ENCODE measurements at regions of chr18 and their contacts with region 1.

Region 1: GRCh38 chr18:41378598-41378997 is 576.4 kb upstream of the PIK3C3 start:
- DNase-seq: peak; percentile 70
- ATAC-seq: peak; percentile 97
- H3K4me3 ChIP-seq: no peak overlapping the region
- H3K27ac ChIP-seq: no peak overlapping the region
- H3K4me1 ChIP-seq: no peaks in the 10 kb centered on the region
- H3K27me3 ChIP-seq: no peaks in the 10 kb centered on the region; the same call in 1 of the 2 replicates
- CTCF ChIP-seq: peak; percentile 69
- POLR2A ChIP-seq: no peak
- RAD21 ChIP-seq: peak; percentile 82

Region 2: DNA sequence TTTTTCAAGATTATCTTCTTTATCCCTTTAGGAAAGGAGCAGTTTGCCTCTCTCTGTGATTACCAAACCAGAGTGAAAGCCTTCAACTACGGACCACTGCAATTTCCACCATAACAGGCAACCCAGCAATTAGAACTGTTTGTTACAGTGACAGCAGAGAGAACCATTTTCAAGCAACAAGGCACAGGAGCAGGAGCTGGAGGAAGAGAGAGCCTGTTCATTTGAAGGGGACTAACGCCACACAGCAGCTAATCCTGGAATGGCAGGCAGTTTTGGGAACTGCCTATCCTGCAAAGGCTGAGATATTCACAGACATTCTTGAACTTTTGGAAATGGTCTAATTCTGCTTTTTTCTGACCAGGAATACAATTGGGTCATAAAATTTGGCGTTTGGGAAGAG is 965.4 kb before region 1 on chr18:
- CTCF ChIA-PET with region 1: no interaction called
- POLR2A ChIA-PET with region 1: no interaction called
- dilution Hi-C with region 1: no loop called
- in situ Hi-C with region 1: loop called (anchors 25 kb)
- intact Hi-C with region 1: loop called (anchors 10 kb)
- DNase-seq: peak; percentile 45
- ATAC-seq: peak; percentile 63; the same call in 1 of the 2 replicates
- H3K4me3 ChIP-seq: no peak overlapping the region
- H3K27ac ChIP-seq: no peak overlapping the region
- H3K4me1 ChIP-seq: no peaks in the 10 kb centered on the region
- H3K27me3 ChIP-seq: no peaks in the 10 kb centered on the region
- CTCF ChIP-seq: peak; percentile 57
- POLR2A ChIP-seq: no peak
- RAD21 ChIP-seq: peak; percentile 75

Region 3: DNA sequence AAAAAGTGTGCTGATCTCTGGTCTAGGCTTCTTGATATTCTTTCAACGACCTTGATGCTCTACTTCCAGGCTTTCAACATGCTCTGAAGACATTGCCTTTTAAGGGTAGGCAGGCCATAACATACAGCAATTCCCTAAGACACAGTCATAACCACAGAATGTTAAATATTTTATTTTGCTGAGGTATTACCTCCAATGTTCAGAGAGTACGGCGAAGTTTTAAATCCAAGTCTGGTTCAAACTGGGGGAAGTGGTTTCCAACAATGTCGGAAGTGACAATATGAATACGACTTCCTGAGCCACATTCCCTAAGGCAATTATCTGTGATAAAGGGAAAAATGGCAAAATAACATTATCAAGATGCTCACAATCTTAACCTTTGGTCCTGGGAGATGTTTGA is 501.5 kb before region 1 on chr18:
- CTCF ChIA-PET with region 1: no interaction called
- POLR2A ChIA-PET with region 1: no interaction called
- dilution Hi-C with region 1: no loop called
- in situ Hi-C with region 1: no loop called
- intact Hi-C with region 1: loop called (anchors 1 kb)
- DNase-seq: peak; percentile 97
- ATAC-seq: peak; percentile 95
- H3K4me3 ChIP-seq: no peak overlapping the region
- H3K27ac ChIP-seq: peak overlapping the region; percentile 75
- H3K4me1 ChIP-seq: peaks cover 12% of the 10 kb centered on the region
- H3K27me3 ChIP-seq: no peaks in the 10 kb centered on the region
- CTCF ChIP-seq: no peak
- POLR2A ChIP-seq: no peak
- RAD21 ChIP-seq: no peak; the same call in 1 of the 2 replicates

Region 4: GRCh38 chr18:40957533-40958070 is 421.0 kb before region 1 on chr18:
- CTCF ChIA-PET with region 1: interaction called, 3 read pairs
- POLR2A ChIA-PET with region 1: no interaction called
- dilution Hi-C with region 1: no loop called
- in situ Hi-C with region 1: no loop called
- intact Hi-C with region 1: loop called (anchors 10 kb)
- DNase-seq: peak; percentile 52
- ATAC-seq: peak; percentile 66
- H3K4me3 ChIP-seq: no peak overlapping the region
- H3K27ac ChIP-seq: no peak overlapping the region
- H3K4me1 ChIP-seq: no peaks in the 10 kb centered on the region; the same call in 1 of the 2 replicates
- H3K27me3 ChIP-seq: no peaks in the 10 kb centered on the region
- CTCF ChIP-seq: no peak
- POLR2A ChIP-seq: no peak
- RAD21 ChIP-seq: no peak

Region 5: GRCh38 chr18:41144441-41144840 is 234.2 kb before region 1 on chr18:
- CTCF ChIA-PET with region 1: no interaction called
- POLR2A ChIA-PET with region 1: no interaction called
- dilution Hi-C with region 1: no loop called
- in situ Hi-C with region 1: no loop called
- intact Hi-C with region 1: loop called (anchors 10 kb)
- DNase-seq: peak; percentile 82
- ATAC-seq: peak; percentile 91
- H3K4me3 ChIP-seq: no peak overlapping the region
- H3K27ac ChIP-seq: no peak overlapping the region
- H3K4me1 ChIP-seq: no peaks in the 10 kb centered on the region; the same call in 1 of the 2 replicates
- H3K27me3 ChIP-seq: no peaks in the 10 kb centered on the region
- CTCF ChIP-seq: no peak
- POLR2A ChIP-seq: no peak
- RAD21 ChIP-seq: no peak

Measured in IMR-90 (cell line).